Esophagus muscularis mucosa (tissue), 4 donors: ENCODE measurements at regions of chr1 and their contacts with region 1.

Region 1: DNA sequence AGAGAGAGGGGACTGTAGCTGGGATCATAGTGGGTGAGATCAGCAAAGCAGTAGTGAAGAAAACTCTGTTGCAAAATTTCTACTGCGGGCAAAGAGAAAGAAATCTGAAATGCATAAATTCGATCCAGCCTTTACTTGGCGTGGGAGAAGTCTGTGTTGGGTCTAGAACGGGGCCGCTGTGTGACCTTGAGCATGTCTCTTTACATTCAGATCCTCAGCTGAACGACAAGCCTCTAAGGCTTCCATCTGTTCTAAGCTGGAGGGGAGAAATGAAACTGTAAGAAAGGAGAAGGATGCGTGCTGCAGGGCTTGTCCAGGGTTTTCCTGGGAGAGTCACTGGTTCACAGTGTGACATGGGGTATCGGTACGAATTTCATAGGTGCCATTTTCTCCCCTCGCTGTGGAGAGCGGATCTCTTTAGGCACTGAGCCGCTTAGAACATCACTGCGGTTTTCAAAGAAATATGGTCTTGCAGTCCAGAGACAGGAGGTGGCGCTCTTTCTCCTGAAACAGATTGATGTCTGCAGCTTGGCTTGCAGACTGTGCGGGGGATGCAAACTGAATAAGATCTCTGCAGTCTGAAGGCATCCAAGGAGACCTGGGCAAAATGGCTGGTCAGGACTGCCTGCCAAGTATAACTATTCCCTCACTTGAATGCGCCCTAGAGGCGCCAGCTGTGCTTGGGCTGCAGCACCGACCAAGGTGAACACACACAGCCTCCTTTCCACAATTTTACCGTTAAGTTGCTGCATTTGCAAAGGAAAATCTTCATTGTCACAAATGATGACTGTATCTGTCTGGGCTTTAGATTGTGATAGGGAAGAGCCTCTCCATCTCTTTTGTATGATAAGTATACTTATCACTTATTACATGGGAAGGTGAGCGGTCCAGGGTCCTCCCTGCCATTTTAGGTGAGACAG is 104.1 kb downstream of the XCL2 start:
- DNase-seq: peak; percentile 95
- H3K4me3 ChIP-seq: peak overlapping the region; percentile 14 to 36 (median 27)
- H3K27ac ChIP-seq: no peak overlapping the region
- H3K4me1 ChIP-seq: peaks cover 0 to 17% (median 10%) of the 10 kb centered on the region in 4 donors
- H3K27me3 ChIP-seq: no peaks in the 10 kb centered on the region
- CTCF ChIP-seq: peak; percentile 64 to 74 (median 73)
- EP300 ChIP-seq: no peak
- POLR2A ChIP-seq: no peak

Region 2: GRCh38 chr1:168273575-168273974 is 166.1 kb before region 1 on chr1:
- intact Hi-C with region 1: no loop called
- DNase-seq: no peak
- H3K4me3 ChIP-seq: no peak overlapping the region
- H3K27ac ChIP-seq: no peak overlapping the region
- H3K4me1 ChIP-seq: no peaks in the 10 kb centered on the region
- H3K27me3 ChIP-seq: no peaks in the 10 kb centered on the region
- CTCF ChIP-seq: no peak
- EP300 ChIP-seq: no peak
- POLR2A ChIP-seq: no peak

Region 3: DNA sequence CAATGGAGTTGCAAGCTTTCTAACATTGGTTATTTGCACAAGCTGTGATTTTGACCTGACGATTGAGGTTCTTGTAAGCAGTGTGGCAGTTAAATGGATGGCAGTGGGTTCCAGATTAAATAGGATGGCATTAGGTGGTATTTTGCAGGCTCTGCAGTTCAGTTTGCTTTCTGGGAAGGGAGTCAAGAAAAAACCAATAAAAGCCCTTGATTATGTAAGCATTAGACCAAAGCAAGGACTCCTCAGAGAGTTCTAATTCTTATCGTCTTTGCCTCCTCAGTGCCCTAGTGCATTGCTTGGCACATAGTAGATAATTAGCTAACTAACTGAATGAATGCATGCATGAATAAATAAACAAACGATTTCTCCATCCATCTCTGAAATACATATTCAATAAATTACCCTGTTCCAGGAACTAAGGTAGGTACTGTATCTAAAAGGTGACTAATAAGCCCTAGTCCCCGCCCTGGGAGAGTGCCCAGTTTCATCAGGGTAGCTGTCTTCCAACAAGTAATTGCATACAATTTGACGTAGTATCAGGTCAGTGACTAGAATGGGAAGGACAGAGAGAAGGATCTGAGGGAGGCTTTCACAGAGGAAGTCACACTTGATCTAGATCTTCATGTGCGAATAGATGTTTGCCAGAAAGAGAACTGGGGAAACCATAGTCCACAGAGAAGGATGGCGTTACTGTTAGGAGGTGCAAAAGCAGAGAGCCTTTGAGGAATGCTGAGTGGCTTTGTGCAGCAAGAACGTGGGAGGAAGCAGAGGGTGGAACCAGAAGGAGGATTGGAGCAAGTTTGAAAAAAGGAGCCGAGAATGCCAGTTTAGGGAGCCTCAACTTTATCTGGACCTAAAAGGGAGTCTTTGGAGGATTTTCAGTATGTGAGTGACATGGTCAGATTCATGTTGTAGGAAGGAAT is 47.7 kb before region 1 on chr1:
- intact Hi-C with region 1: no loop called
- DNase-seq: peak; percentile 62
- H3K4me3 ChIP-seq: no peak overlapping the region
- H3K27ac ChIP-seq: no peak overlapping the region
- H3K4me1 ChIP-seq: peaks cover 0 to 28% (median 21%) of the 10 kb centered on the region in 4 donors
- H3K27me3 ChIP-seq: no peaks in the 10 kb centered on the region
- CTCF ChIP-seq: no peak
- EP300 ChIP-seq: no peak
- POLR2A ChIP-seq: no peak

Region 4: GRCh38 chr1:168483539-168483938 is 43.8 kb after region 1 on chr1:
- intact Hi-C with region 1: no loop called
- DNase-seq: no peak
- H3K4me3 ChIP-seq: no peak overlapping the region
- H3K27ac ChIP-seq: peak overlapping the region; percentile 66 to 81 (median 75)
- H3K4me1 ChIP-seq: peaks cover 7 to 74% (median 69%) of the 10 kb centered on the region in 4 donors
- H3K27me3 ChIP-seq: no peaks in the 10 kb centered on the region
- CTCF ChIP-seq: no peak
- EP300 ChIP-seq: no peak
- POLR2A ChIP-seq: no peak

Region 5: GRCh38 chr1:168572633-168573032 is 132.9 kb after region 1 on chr1:
- intact Hi-C with region 1: loop called (anchors 5 kb)
- DNase-seq: no peak
- H3K4me3 ChIP-seq: no peak overlapping the region
- H3K27ac ChIP-seq: no peak overlapping the region
- H3K4me1 ChIP-seq: no peaks in the 10 kb centered on the region
- H3K27me3 ChIP-seq: no peaks in the 10 kb centered on the region
- CTCF ChIP-seq: no peak
- EP300 ChIP-seq: no peak
- POLR2A ChIP-seq: no peak

Region 6: DNA sequence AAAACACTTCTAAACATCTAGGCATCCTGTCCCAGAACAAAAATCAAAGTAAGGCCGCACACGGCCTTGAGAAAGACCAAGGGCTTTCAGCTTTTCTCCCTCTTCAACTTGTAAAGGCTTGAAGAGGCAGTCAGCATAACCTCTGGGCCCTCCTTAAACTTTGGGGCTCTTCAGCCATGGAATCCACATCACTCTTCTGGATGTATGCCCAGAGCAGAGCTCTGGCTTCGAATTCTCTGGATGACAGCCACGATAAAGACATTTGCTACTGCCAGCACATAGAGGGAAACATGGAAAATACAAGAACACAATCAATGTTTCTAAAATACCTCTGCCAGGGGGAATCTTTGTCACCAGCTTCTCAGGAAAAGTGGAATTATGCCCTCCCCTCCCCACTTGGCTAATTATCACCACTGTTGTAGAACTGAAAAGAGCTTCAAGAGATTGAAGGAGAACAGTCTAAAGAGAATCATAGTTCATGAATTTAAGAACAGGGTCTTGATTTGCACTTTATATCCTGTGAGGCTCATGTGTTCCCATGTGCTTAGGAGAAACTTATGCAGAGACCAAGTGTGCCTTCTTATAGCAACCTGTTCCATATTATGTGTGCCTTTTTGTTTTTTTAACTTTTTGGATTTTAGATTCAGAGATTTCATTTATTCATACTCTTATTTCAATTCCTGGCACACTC is 328.3 kb after region 1 on chr1:
- intact Hi-C with region 1: no loop called
- DNase-seq: no peak
- H3K4me3 ChIP-seq: no peak overlapping the region
- H3K27ac ChIP-seq: peak overlapping the region; percentile 24 to 63 (median 48)
- H3K4me1 ChIP-seq: peaks cover 10 to 34% (median 26%) of the 10 kb centered on the region in 4 donors
- H3K27me3 ChIP-seq: no peaks in the 10 kb centered on the region
- CTCF ChIP-seq: no peak
- EP300 ChIP-seq: no peak
- POLR2A ChIP-seq: no peak

Region 7: GRCh38 chr1:168783458-168784230 is 343.9 kb after region 1 on chr1:
- intact Hi-C with region 1: loop called (anchors 10 kb)
- DNase-seq: no peak
- H3K4me3 ChIP-seq: no peak overlapping the region
- H3K27ac ChIP-seq: peak overlapping the region; percentile 43 to 60 (median 56)
- H3K4me1 ChIP-seq: peaks cover 3 to 17% (median 9%) of the 10 kb centered on the region in 4 donors
- H3K27me3 ChIP-seq: no peaks in the 10 kb centered on the region
- CTCF ChIP-seq: no peak
- EP300 ChIP-seq: no peak
- POLR2A ChIP-seq: no peak

Region 8: GRCh38 chr1:169106095-169106920 is 666.6 kb after region 1 on chr1 and contains the start of gene ATP1B1:
- intact Hi-C with region 1: loop called (anchors 10 kb)
- DNase-seq: no peak
- H3K4me3 ChIP-seq: peak within 1 kb of the TSS; percentile 68 to 98 (median 93)
- H3K27ac ChIP-seq: peak within 1 kb of the TSS; percentile 90 to 98 (median 96)
- H3K4me1 ChIP-seq: peaks cover 38 to 70% (median 66%) of the 10 kb centered on the region in 4 donors
- H3K27me3 ChIP-seq: no peaks in the 10 kb centered on the region
- CTCF ChIP-seq: peak; percentile 69 to 73 (median 72)
- EP300 ChIP-seq: no peak
- POLR2A ChIP-seq: peak; percentile 88
- total RNA-seq, gene ATP1B1: 69.4 to 88.6 (median 78.3) TPM

Region 9: DNA sequence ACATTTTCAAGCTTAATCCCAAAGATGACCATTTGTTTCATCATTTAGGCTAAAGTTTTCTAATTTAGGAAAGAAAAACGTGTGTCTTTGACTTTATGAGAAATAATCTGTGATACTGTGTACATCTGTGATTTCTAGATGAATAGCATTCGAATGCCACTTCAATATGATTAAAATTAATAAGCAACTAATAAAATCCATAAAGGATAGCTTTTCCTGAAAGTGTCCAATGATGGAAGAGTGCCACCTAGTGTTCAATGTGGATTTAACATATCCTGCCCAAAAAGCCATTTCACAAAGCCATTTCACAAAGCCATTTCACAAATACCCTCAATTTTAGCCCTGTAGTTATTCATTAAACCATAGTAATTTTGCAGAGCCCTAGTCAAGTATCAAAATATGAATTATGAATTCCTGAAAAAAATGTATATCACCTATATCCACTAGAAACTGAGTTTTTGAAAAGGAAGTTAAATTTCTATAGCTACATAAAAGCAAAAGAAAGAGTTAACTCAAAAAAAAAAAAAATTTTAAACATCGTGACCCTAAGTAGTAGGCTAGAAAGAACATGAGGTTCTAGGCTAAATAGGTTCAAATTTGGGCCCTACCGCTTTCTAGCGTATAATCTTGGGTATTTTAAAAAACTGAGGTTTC is 908.8 kb after region 1 on chr1:
- intact Hi-C with region 1: loop called (anchors 10 kb)
- DNase-seq: no peak
- H3K4me3 ChIP-seq: no peak overlapping the region
- H3K27ac ChIP-seq: no peak overlapping the region
- H3K4me1 ChIP-seq: no peaks in the 10 kb centered on the region
- H3K27me3 ChIP-seq: no peaks in the 10 kb centered on the region
- CTCF ChIP-seq: peak; percentile 73 to 83 (median 78)
- EP300 ChIP-seq: no peak
- POLR2A ChIP-seq: no peak